ENCODE measurements at regions of chr1 and their contacts with region 1.

Region 1: DNA sequence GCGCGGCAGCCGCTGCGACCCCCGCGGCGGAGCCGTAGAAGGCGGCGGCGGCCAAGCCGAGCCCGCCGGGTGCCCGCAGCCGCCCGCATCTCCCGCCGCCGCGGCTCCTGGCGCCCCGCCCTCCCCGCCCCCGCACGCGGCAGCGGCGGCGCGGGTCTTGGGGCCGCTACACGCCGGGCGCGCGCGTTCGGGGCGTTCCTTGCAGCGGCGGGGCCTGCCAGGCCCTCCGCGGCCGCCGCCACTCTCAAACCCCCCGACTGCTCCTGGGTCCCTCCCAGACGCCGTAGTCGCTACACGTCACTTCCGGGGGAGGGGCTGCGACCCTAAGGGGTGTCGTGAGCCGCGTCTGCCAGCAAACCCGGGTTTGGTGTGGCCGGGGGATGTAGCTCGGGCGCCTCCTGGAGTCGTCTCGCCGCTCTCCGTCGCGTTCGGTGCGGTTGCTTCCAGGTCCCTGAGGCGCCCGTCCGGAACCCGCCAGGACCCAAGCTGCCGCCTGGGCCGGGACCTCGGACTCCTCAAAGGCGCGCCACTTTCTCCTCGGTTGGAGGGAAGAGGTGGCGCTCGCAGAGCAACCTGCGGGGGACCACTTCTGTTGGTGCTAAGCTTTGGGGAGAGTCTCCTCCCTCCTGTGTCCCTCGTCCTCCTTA is at the start of gene ELK4:
- DNase-seq: peak; percentile 100
- H3K4me3 Mint-ChIP-seq: peak within 1 kb of the TSS; percentile 85
- H3K27ac Mint-ChIP-seq: peak within 1 kb of the TSS; percentile 90
- H3K4me1 Mint-ChIP-seq: peaks cover 34% of the 10 kb centered on the region
- H3K27me3 Mint-ChIP-seq: no peaks in the 10 kb centered on the region
- total RNA-seq, gene ELK4: 60.7 to 65.8 TPM

Region 2: DNA sequence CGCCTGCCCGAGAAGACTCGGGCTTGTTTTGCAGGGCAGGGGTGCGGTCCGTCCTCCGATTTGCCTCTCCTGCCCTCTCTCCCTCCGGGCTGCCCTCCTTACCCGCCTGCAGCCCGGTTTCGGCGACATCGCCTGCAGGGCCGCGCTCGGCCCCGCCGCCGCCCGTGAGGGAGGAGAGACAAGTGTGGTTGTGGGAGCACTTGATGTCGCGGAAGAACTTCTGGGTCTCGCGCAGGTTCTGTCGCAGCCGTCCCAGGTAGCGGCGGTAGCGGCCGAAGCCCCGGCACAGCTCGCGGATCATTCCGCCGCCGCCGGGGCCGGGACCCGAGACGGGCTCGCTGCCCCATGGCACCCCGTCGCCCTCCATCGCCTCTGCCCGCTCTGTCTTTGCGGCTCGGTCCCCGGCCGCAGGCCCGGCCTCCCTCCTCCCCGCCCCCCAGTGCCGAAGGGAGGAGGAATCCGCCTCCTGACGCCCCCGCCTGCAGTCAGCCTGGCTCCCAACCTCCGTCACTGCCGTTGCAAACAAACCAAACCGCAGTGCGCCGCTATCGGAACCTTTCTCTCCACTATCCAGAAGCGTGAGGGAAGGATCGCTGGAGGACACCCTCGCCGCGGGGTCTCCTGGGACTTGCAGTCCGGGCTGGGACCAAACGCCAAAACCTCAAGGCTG is 420.5 kb before region 1 on chr1 and contains the start of gene DSTYK:
- CTCF ChIA-PET with region 1: no interaction called
- POLR2A ChIA-PET with region 1: no interaction called
- intact Hi-C with region 1: loop called (anchors 5 kb)
- DNase-seq: peak; percentile 96
- H3K4me3 Mint-ChIP-seq: peak within 1 kb of the TSS; percentile 92
- H3K27ac Mint-ChIP-seq: peak within 1 kb of the TSS; percentile 91
- H3K4me1 Mint-ChIP-seq: peaks cover 48% of the 10 kb centered on the region
- H3K27me3 Mint-ChIP-seq: no peaks in the 10 kb centered on the region
- total RNA-seq, gene DSTYK: 9.0 to 9.8 TPM

Region 3: GRCh38 chr1:205284343-205285144 is 347.3 kb before region 1 on chr1:
- CTCF ChIA-PET with region 1: no interaction called
- POLR2A ChIA-PET with region 1: no interaction called
- intact Hi-C with region 1: loop called (anchors 5 kb)
- DNase-seq: peak; percentile 95
- H3K4me3 Mint-ChIP-seq: peak overlapping the region; percentile 38
- H3K27ac Mint-ChIP-seq: peak overlapping the region; percentile 68
- H3K4me1 Mint-ChIP-seq: peaks cover 77% of the 10 kb centered on the region
- H3K27me3 Mint-ChIP-seq: no peaks in the 10 kb centered on the region

Region 4: GRCh38 chr1:205528887-205529825 is 102.7 kb before region 1 on chr1:
- CTCF ChIA-PET with region 1: interaction called, 34 read pairs
- POLR2A ChIA-PET with region 1: no interaction called
- intact Hi-C with region 1: loop called (anchors 2 kb)
- DNase-seq: peak; percentile 85
- H3K4me3 Mint-ChIP-seq: peak overlapping the region; percentile 37
- H3K27ac Mint-ChIP-seq: no peak overlapping the region
- H3K4me1 Mint-ChIP-seq: peaks cover 4% of the 10 kb centered on the region
- H3K27me3 Mint-ChIP-seq: peaks cover 7% of the 10 kb centered on the region

Region 5: GRCh38 chr1:205600085-205600484 is 31.8 kb before region 1 on chr1:
- CTCF ChIA-PET with region 1: interaction called, 316 read pairs
- POLR2A ChIA-PET with region 1: interaction called, 78 read pairs
- intact Hi-C with region 1: no loop called
- DNase-seq: peak; percentile 36
- H3K4me3 Mint-ChIP-seq: no peak overlapping the region
- H3K27ac Mint-ChIP-seq: peak overlapping the region; percentile 77
- H3K4me1 Mint-ChIP-seq: peaks cover 31% of the 10 kb centered on the region
- H3K27me3 Mint-ChIP-seq: no peaks in the 10 kb centered on the region

Region 6: DNA sequence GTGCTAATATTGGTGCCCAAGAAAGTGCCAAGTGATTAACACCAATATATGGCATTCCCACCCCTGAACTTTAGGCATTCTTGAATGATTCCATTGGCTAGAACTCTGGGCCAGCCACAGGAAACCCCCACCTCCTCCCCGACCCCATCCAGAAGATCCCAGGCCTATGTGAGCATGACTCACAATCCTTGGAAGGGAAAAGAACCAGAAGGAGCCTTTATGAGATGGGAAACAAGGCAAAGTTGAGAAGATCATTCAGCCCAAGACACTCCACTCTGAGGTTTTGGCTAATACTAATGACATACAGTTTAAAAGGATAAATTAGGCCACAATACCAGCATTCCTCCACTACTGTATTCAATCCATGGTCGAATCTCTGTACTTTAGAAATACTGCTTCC is 21.8 kb before region 1 on chr1:
- CTCF ChIA-PET with region 1: interaction called, 8 read pairs
- POLR2A ChIA-PET with region 1: interaction called, 3 read pairs
- intact Hi-C with region 1: loop called (anchors 2 kb)
- DNase-seq: no peak
- H3K4me3 Mint-ChIP-seq: no peak overlapping the region
- H3K27ac Mint-ChIP-seq: no peak overlapping the region
- H3K4me1 Mint-ChIP-seq: peaks cover 44% of the 10 kb centered on the region
- H3K27me3 Mint-ChIP-seq: no peaks in the 10 kb centered on the region

Region 7: DNA sequence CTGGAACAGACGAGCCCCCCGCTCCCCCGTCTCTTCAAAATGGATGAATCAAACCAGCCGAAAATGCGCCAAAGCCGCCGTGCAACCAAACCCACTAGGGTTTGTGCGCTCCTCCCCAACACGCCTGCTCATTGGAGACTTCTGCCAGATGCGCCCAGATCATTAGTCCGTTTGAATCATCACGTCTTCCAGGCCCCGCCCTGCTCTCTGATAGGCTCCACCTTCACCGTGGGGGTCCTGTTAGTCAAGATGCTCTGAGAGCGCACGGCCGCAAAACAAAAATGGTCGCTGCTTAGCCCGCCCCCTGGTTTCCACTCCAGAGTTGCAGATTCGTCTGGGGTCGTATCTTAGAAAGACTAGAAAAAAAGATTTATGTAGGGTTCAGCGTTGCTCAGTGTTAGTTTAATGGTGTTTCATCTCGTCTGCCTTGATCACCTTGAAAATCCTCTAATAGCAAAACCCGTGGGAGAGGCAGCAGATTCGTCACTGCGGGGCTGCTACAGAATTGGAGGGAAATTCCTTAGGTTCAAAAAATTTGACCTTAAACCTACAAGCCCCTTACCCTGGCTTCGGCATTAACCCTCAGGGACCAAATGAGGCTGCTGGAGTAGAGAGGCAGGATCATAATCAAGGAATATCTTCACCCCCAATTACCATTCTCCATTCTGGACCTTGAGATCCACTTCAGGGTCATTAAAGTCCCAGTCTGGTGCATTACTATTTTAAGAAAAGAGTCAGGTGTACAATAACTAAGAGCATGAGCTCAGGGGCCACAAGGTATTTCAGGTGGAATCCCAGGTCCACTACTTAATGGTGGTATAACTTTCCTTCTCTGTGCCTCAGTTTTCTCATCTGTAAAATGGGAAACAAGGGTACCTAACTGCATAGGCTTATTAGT is 118.5 kb after region 1 on chr1 and contains the start of gene NUCKS1:
- CTCF ChIA-PET with region 1: no interaction called
- POLR2A ChIA-PET with region 1: interaction called, 16 read pairs
- intact Hi-C with region 1: loop called (anchors 1 kb)
- DNase-seq: peak; percentile 98
- H3K4me3 Mint-ChIP-seq: peak within 1 kb of the TSS; percentile 93
- H3K27ac Mint-ChIP-seq: peak within 1 kb of the TSS; percentile 99
- H3K4me1 Mint-ChIP-seq: peaks cover 30% of the 10 kb centered on the region
- H3K27me3 Mint-ChIP-seq: peaks cover 1% of the 10 kb centered on the region
- total RNA-seq, gene NUCKS1: 149 to 202 TPM